HAP-1 (cell line): ENCODE measurements at regions of chr22 and their contacts with region 1.

Region 1: GRCh38 chr22:19407649-19408606 is 23.6 kb downstream of the HIRA start:
- DNase-seq: peak in 1 of 2 experiments; percentile 15
- H3K4me3 ChIP-seq: no peak overlapping the region
- H3K4me1 ChIP-seq: no peaks in the 10 kb centered on the region
- H3K27me3 ChIP-seq: no peaks in the 10 kb centered on the region

Region 2: DNA sequence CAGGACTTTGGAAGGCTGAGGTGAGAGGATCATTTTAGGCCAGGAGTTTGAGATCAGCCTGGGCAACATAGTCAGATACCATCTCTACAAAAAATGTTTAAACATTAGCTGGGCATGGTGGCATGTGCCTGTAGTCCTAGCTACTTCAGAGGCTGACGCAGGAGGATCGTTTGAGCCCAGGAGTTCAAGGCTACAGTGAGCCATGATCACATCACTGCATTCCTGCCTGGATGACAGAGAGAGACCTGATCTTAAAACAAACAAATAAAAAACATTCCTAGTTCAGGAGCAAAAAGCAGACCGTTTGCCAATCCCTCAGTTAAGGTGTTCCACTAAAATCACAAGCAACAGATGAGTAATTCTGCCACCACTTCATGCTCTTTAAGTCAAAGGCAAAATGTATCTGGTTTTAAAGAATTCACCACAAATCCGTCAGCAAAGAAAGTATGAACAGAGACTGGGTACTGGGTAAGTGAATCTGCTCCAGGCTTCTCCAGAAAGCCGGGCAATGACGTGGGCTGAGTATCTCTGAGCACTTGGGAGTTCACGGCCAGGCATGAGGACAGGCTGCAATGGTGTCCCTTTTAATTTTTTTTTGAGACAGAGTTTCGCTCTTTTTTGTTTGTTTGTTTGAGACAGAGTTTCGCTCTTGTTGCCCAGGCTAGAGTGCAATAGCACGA is 135.9 kb before region 1 on chr22:
- in situ Hi-C with region 1: no loop called
- DNase-seq: no peak
- H3K4me3 ChIP-seq: no peak overlapping the region
- H3K4me1 ChIP-seq: no peaks in the 10 kb centered on the region; the same call in 1 of the 2 replicates
- H3K27me3 ChIP-seq: no peaks in the 10 kb centered on the region

Region 3: GRCh38 chr22:19341500-19341899 is 66.4 kb before region 1 on chr22:
- in situ Hi-C with region 1: loop called (anchors 10 kb)
- DNase-seq: no peak
- H3K4me3 ChIP-seq: no peak overlapping the region
- H3K4me1 ChIP-seq: peaks cover 2% of the 10 kb centered on the region; the same call in 1 of the 2 replicates
- H3K27me3 ChIP-seq: no peaks in the 10 kb centered on the region